ENCODE measurements at regions of chr10 and their contacts with region 1.

Region 1: DNA sequence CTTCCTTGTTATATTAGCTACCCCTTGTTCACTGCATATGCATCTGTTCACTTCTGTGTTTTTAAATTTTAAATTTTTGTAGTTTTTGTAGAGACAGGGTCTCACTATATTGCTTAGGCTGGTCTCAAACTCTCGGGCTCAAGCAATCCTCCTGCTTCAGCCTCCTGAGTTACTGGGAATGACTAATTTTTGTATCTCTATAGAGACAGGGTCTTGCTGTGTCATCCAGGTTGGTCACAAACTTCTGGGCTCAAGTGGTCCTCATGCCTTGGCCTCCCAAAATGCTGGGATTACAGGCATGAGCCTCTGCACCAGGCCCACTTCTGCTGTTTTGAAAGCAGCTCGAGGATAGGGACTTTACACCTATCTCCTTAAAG is 64.6 kb downstream of the PRTFDC1 start:
- DNase-seq: no peak
- H3K4me3 ChIP-seq: no peak overlapping the region
- H3K27ac ChIP-seq: no peak overlapping the region
- H3K4me1 ChIP-seq: peaks cover 48% of the 10 kb centered on the region
- H3K27me3 ChIP-seq: no peaks in the 10 kb centered on the region
- CTCF ChIP-seq: no peak

Region 2: GRCh38 chr10:24873281-24873683 is 14.6 kb before region 1 on chr10:
- CTCF ChIA-PET with region 1: no interaction called
- POLR2A ChIA-PET with region 1: interaction called, 3 read pairs
- intact Hi-C with region 1: loop called (anchors 2 kb)
- DNase-seq: peak; percentile 47 to 87
- H3K4me3 ChIP-seq: no peak overlapping the region
- H3K27ac ChIP-seq: peak overlapping the region; percentile 64
- H3K4me1 ChIP-seq: peaks cover 18% of the 10 kb centered on the region
- H3K27me3 ChIP-seq: no peaks in the 10 kb centered on the region
- CTCF ChIP-seq: no peak

Measured in PC-9 (cell line).